ENCODE measurements at regions of chr17 and their contacts with region 1.

Region 1: DNA sequence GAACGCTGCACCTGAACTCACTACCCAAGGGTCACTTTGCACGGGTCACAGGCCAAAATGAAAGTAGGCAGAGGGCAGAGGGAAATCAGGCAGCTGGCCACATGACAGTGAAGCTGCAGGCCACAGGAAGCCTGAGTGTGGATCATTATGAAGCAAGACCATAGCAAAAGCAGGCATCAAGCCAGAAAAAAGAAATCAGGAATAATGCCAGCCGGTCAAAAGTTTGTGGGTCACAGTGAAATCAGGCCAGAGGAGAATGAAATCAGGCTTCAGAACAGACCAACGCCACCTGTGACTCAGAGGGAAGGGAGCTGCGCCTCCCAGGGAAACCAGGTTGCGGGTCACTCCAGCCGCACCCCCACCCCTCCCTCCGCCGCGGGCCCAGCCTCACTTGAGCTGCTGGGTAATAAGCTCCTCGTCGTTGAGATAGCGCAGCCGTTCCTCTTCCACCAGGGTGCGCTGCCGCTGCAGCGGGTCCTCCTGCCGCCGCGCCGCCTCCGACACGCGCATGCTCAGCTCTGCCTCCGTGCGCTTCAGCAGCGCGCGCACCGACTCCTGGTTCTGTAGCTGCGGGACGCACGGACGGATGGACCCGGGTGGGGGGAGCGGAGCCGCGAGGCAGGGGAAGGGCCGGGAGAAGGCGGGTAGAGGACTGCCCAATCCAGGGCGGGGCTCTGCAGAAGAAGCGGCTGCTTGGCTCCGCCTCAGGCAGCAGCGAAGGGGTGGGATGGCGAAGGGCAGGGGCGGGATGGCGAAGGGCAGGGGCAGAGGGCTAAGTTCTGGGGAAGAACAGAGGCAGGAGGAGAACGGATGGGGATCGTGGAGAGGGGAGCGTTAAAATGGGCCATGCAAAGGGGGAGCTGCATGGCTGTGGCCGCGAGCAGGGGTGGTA is 47.7 kb downstream of the SRCIN1 start:
- H3K4me3 ChIP-seq: peak overlapping the region; percentile 37
- H3K27ac ChIP-seq: no peak overlapping the region
- H3K4me1 ChIP-seq: peaks cover 15% of the 10 kb centered on the region
- CTCF ChIP-seq: peak; percentile 99

Region 2: DNA sequence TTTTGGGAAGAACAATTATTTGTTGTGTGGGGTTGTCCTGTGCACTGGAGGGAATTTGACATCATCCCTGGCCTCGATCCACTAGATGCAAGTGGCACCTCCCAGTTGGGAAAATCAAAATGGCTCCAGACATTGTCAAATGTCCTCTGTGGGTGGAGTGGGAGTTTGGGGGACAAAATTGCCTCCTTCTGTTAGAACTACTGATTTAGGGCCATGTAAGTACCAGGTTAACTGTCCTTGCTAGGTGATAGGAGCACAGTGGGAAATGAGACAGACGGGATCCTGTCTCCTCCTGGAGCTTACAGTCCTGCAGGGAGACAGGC is 73.0 kb before region 1 on chr17:
- CTCF ChIA-PET with region 1: no interaction called
- POLR2A ChIA-PET with region 1: no interaction called
- H3K4me3 ChIP-seq: no peak overlapping the region
- H3K27ac ChIP-seq: no peak overlapping the region
- H3K4me1 ChIP-seq: no peaks in the 10 kb centered on the region
- CTCF ChIP-seq: no peak

Region 3: DNA sequence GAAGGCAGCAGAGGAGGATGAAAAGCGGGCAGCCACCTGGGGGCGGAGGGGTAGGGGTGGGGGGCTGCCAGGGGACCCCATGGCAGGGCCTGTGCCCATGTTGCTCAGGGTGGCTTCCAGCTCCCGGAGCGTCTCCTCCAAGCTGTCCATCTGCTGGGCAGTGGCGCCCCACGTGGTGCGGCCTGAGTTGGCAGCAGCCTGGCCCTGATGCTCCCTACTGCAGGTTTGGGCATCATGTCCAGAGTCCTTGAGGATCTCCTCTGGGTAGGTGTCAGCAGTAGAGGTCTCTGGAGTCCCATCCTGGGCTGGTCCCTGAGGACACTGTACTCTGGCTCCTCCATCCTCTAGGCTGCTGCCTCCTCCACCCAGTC is 13.3 kb before region 1 on chr17:
- CTCF ChIA-PET with region 1: interaction called, 39 read pairs
- POLR2A ChIA-PET with region 1: interaction called, 4 read pairs
- H3K4me3 ChIP-seq: no peak overlapping the region
- H3K27ac ChIP-seq: no peak overlapping the region
- H3K4me1 ChIP-seq: no peaks in the 10 kb centered on the region
- CTCF ChIP-seq: no peak

Region 4: DNA sequence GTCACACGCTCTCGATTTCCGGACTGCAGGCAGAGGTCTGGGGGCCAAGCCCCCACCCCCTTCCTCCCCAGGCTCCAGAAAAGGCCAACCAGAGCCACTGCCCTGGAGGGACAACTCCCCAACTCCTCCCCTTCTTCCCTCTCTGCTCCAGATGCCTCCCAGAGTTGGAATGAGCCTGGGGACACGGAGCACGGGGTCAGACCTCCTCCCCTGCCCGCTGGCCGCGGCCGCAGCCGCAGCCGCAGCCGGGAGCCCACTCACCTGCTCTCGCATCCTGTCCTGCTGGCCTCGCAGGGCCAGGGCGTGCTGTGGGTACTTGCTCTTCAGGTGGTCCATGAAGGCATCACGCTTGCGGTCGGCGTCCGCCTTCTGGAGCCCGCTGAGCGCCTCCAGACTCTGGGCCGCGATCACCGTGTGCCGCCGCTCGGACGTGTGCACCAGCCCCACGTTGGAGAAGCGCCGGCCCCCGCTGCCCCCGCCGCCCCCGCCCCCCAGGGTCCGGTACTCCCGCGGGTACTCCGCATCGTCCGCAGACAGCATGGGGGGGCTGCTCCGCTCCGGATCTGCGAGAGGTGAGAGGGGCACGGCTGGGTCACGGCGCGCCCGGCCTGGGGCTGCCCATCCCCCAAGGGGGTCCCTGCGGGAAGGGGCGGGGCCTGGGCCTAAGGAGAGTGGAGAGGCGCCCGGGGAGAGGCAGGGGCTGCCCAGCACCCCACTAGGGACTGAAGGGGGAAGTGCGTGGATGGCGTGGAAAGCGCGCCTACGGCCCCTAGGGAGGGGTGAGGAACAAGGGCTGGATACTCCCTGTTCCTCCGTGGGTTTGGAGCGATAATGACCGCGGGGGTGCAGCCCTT is 20.4 kb after region 1 on chr17:
- CTCF ChIA-PET with region 1: interaction called, 264 read pairs
- POLR2A ChIA-PET with region 1: interaction called, 14 read pairs
- H3K4me3 ChIP-seq: no peak overlapping the region
- H3K27ac ChIP-seq: no peak overlapping the region
- H3K4me1 ChIP-seq: 0 out of 2 replicates have a peak, but pooled peaks cover 2% of the 10 kb centered on the region
- CTCF ChIP-seq: no peak

Region 5: DNA sequence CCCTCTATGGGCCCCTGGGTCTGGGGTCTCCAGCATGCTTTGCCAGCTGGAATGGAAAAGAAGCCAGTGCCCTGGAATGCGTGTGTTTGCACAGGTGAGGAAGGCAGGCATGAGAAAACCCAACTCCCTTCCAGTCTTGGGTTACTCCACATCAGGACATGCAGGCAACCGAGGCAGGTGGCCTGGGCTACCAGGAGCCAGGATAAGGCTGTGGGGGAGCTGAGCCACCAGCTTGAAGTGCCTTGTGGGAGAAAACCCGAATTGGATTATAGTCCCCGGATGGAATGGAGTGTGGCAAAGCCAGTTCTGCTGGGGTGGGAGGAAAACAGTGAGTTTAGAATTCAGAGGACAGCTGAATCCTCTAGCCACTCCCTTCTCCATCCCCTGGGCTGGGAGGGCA is 40.5 kb after region 1 on chr17:
- CTCF ChIA-PET with region 1: interaction called, 60 read pairs
- POLR2A ChIA-PET with region 1: interaction called, 7 read pairs
- H3K4me3 ChIP-seq: no peak overlapping the region
- H3K27ac ChIP-seq: no peak overlapping the region
- H3K4me1 ChIP-seq: peaks cover 18% of the 10 kb centered on the region
- CTCF ChIP-seq: no peak

Region 6: DNA sequence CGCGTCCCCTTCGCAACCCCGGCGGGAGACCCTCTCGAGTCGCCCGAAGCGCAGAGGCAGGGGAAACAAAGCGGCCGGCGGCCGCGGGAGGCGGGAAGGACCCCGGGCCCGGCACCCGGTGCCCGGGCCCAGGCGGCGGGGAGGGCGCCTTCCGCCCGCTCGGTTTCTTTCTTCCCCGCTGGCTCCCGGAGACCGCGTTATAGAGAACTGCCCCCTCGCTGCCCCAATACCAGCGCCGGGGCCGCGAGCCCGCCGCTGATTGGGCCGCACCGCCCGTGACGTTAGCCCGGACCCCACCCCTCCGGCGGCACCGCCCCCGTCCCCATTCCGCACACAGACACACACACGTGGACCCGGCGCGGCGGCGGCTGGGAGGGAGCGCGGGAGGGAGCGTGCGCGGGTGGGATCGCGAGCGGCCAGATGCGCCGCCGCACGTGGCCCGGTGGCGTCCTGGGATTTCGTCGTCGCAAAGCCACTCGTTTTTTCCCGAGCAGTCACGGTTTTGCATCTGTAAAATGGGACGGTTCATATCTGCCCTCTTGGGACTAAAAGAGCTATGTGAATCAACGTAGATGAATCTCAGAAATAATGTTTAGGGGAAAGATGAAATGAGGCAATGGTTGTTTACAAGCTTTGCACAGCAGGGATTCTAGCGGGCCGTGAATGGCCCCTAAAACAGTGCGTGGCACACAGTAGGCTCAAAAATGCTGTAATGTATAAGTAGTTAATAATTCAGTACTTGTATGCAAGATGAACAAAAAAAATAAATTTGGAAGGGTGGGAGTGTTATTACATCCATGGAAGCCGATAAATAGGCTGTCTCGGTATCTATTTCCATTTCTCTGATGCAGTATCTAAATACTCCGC is 116.9 kb after region 1 on chr17 and contains the start of gene EPOP:
- CTCF ChIA-PET with region 1: interaction called, 254 read pairs
- POLR2A ChIA-PET with region 1: interaction called, 3 read pairs
- H3K4me3 ChIP-seq: peak within 1 kb of the TSS; percentile 45
- H3K27ac ChIP-seq: peak within 1 kb of the TSS; percentile 8; the same call in 1 of the 2 replicates
- H3K4me1 ChIP-seq: peaks cover 18% of the 10 kb centered on the region
- CTCF ChIP-seq: no peak

Measured in HEK293 (cell line).